Lower lobe of right lung (tissue), 2 donors: ENCODE measurements at regions of chr19 and their contacts with region 1.

Region 1: GRCh38 chr19:30692181-30692811 is 320.1 kb downstream of the ZNF536 start:
- DNase-seq: no peak
- ATAC-seq: no peak
- H3K4me3 ChIP-seq: peak overlapping the region; percentile 4
- H3K27ac ChIP-seq: no peak overlapping the region
- H3K4me1 ChIP-seq: peaks cover 11% of the 10 kb centered on the region
- H3K27me3 ChIP-seq: peaks cover 6% of the 10 kb centered on the region
- CTCF ChIP-seq: no peak

Region 2: DNA sequence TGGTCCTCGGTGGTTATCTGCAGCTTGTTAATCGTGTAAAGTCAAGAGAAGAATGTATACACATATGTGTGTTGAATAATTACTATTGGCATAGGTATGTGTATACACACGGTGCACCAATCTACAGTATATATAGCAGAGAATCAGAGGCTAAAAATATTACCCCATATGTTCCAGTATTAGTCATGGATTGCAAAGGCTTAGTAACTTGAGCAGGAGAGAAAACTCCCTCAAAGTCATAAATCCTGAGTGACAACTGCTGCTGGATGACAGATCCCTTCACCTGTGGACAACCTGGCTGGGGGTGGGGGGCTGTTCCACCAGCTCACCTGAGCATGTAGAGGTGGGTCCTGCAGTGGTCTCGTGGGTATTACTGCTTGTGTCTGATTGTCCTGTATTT is 135.1 kb before region 1 on chr19:
- intact Hi-C with region 1: no loop called
- DNase-seq: no peak
- ATAC-seq: no peak
- H3K4me3 ChIP-seq: no peak overlapping the region
- H3K27ac ChIP-seq: no peak overlapping the region
- H3K4me1 ChIP-seq: no peaks in the 10 kb centered on the region
- H3K27me3 ChIP-seq: peaks cover 17% of the 10 kb centered on the region
- CTCF ChIP-seq: no peak

Region 3: DNA sequence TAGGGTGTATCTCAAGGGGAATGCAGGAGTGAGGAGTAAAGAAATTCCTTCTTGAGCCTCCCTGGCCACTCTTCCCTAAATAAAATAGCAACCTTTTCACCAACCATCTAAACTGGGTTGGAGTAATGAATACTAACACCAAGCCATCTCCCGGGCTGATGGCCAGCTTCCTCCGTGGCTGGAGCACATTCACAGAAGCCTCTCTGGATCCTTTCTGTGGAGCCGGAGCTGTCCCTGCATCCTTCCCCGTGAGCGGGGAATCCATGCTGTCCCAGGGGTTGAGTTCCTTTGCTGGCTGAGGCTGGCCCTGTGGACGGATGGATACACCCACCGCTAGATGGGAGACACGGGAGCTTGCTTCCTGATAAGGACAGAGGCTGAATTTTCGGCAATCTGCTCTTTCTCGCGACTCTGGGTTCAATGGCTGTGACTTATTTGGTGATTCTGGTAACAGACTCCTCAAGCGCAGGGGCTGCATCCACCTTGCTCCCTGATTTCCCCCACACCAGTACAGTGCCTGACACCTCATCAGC is 50.2 kb after region 1 on chr19:
- intact Hi-C with region 1: no loop called
- DNase-seq: no peak
- ATAC-seq: no peak
- H3K4me3 ChIP-seq: no peak overlapping the region
- H3K27ac ChIP-seq: no peak overlapping the region
- H3K4me1 ChIP-seq: no peaks in the 10 kb centered on the region
- H3K27me3 ChIP-seq: peaks cover 2% of the 10 kb centered on the region
- CTCF ChIP-seq: no peak

Region 4: DNA sequence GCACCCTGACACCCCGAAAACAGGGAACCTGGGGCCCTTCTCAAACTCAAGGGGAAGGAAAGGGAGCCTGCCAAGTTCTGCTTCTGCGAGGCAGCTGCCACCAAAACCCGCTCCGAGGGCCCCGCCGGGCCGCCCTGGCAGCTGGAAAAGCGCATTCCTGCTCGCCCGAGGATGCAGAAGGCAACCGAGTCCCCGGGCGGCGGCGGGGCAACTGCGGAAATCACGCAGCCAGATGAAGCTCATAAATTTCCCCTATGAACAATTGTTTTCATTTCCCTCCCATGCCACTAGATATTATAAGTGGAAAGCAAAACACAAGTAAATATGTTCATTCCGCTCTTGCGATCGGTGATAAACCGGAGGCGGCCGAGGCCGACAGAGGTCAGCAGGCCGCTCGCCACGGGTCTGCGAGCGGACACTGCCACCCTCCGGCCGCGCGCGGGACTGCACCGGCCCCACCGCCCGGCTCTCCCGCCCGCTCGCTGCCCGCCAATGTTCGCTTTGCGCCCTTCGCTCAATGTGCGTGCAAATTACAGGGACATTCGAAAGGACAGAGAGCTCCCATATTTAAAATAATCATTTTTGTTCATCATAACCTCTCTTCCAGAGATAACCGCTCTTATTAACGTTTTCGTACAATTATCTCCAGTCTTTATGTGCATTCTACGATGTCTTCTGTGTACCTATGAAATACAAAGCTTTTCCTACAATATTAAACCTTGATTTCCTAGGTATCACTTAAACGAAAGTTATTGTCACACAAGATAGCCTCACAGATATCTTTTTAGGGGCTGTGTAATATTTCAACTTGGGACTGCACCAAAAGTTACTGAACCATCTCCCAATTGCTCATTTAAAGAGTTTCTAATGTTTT is 1532.3 kb after region 1 on chr19:
- intact Hi-C with region 1: loop called (anchors 5 kb)
- DNase-seq: peak; percentile 74
- ATAC-seq: peak; percentile 94 to 95
- H3K4me3 ChIP-seq: peak overlapping the region; percentile 31
- H3K27ac ChIP-seq: no peak overlapping the region
- H3K4me1 ChIP-seq: peaks cover 9% of the 10 kb centered on the region
- H3K27me3 ChIP-seq: peaks cover 24% of the 10 kb centered on the region
- CTCF ChIP-seq: peak; percentile 100